CD4-positive, alpha-beta memory T cell (primary cell): ENCODE measurements at regions of chr5 and their contacts with region 1.

Region 1: DNA sequence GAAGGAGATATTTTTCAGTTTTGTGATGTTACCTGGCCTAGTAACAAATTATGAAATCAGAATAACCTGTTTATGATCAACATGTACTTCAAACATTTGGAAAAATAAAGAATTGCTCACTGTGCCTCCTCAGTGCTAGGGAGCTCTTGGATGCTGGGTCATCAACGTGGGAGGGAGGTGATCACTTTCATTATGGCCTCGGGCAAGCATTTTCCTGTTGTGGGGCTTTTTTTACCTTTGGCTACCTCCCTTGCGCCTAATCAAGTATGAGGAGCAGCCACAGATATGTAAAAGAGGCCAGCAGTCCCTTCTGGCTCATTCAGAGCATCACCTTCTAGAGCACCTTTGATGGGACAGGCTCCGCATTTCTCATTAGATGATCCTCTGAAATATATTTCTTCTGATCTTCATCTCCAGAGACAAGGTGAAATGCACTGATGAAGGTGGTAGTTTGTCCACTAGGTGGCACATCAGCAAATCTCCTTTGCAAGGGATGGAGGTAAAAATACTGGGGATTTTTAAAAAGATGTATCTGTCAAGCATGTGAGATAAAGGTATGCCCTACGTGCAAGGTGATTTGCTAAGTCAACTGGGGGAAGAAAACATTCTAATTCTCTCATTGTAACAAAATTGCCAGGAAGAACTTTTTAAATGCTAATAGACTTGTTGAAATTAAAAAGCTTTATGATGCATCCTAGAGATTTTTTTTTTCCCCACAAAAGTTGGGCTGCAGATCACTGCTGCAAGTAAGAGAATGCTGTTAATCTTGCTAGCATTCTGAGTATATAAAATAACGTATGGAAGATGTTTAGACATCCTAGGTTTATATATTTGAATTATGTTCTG is 218.2 kb downstream of the MAST4 start:
- DNase-seq: peak in 4 of 5 donors; percentile 42 to 51 (median 47)
- H3K4me3 ChIP-seq: no peak overlapping the region
- H3K4me3 Mint-ChIP-seq: peak overlapping the region in 2 of 8 donors; percentile 22 to 27
- H3K27ac ChIP-seq: no peak overlapping the region
- H3K27ac Mint-ChIP-seq: no peak overlapping the region
- H3K4me1 ChIP-seq: no peaks in the 10 kb centered on the region
- H3K4me1 Mint-ChIP-seq: peaks cover 0 to 9% (median 2%) of the 10 kb centered on the region in 4 donors
- H3K27me3 ChIP-seq: no peaks in the 10 kb centered on the region
- H3K27me3 Mint-ChIP-seq: peaks cover 5 to 8% of the 10 kb centered on the region in 2 donors

Region 2: GRCh38 chr5:66828548-66829357 is 14.4 kb after region 1 on chr5:
- CTCF ChIA-PET with region 1: interaction called, 72 read pairs
- POLR2A ChIA-PET with region 1: no interaction called
- intact Hi-C with region 1: no loop called
- DNase-seq: peak; percentile 58 to 79 (median 64)
- H3K4me3 ChIP-seq: peak overlapping the region; percentile 11 to 64
- H3K4me3 Mint-ChIP-seq: peak overlapping the region; percentile 74 to 88 (median 86)
- H3K27ac ChIP-seq: peak overlapping the region; percentile 48
- H3K27ac Mint-ChIP-seq: peak overlapping the region; percentile 20 to 95 (median 83)
- H3K4me1 ChIP-seq: peaks cover 13% of the 10 kb centered on the region
- H3K4me1 Mint-ChIP-seq: peaks cover 14 to 32% (median 17%) of the 10 kb centered on the region in 4 donors
- H3K27me3 ChIP-seq: no peaks in the 10 kb centered on the region
- H3K27me3 Mint-ChIP-seq: peaks cover 1 to 2% of the 10 kb centered on the region in 2 donors

Region 3: GRCh38 chr5:66864331-66864840 is 50.0 kb after region 1 on chr5:
- CTCF ChIA-PET with region 1: interaction called, 4 read pairs
- POLR2A ChIA-PET with region 1: no interaction called
- intact Hi-C with region 1: loop called (anchors 1 kb)
- DNase-seq: peak in 4 of 5 donors; percentile 22 to 39 (median 26)
- H3K4me3 ChIP-seq: no peak overlapping the region
- H3K4me3 Mint-ChIP-seq: peak overlapping the region in 1 of 8 donors; percentile 9
- H3K27ac ChIP-seq: no peak overlapping the region
- H3K27ac Mint-ChIP-seq: no peak overlapping the region
- H3K4me1 ChIP-seq: no peaks in the 10 kb centered on the region
- H3K4me1 Mint-ChIP-seq: no peaks in the 10 kb centered on the region
- H3K27me3 ChIP-seq: peaks cover 3% of the 10 kb centered on the region
- H3K27me3 Mint-ChIP-seq: peaks cover 17 to 20% of the 10 kb centered on the region in 2 donors

Region 4: DNA sequence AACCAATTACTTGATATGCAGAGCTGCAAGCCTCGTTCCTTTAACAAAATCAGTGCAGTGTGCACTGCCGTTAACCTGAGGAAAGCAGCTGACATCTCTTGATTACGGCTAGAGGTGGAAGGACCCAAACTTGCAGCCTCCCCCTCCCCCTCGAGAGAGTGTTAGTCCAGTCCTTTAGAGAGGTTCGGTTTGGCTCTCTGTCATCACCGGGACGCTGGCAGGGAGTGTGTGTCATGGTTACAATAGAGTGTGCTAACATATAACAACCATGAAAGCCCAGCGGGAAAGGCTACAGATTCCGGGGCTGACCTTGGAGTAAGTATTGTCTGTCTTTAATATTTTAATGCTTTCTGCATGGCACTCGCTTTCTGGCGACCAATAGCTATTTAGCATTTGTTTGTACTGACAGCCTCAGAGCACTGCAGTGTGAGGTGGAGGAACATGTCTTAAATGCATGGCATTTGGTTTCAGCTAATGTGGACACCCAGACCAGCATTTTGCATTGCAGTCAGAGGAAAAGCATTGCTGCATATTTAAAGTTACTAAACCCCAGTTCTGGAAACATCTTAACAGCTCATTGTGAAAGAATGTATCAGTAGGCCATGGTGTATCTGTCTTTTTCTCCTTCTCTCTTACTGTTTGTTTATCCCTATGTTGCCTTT is 144.7 kb after region 1 on chr5:
- CTCF ChIA-PET with region 1: no interaction called
- POLR2A ChIA-PET with region 1: no interaction called
- intact Hi-C with region 1: no loop called
- DNase-seq: no peak
- H3K4me3 ChIP-seq: no peak overlapping the region
- H3K4me3 Mint-ChIP-seq: no peak overlapping the region
- H3K27ac ChIP-seq: no peak overlapping the region
- H3K27ac Mint-ChIP-seq: no peak overlapping the region
- H3K4me1 ChIP-seq: no peaks in the 10 kb centered on the region
- H3K4me1 Mint-ChIP-seq: no peaks in the 10 kb centered on the region
- H3K27me3 ChIP-seq: no peaks in the 10 kb centered on the region
- H3K27me3 Mint-ChIP-seq: peaks cover 8 to 12% of the 10 kb centered on the region in 2 donors